ENCODE measurements at regions of chr2 and their contacts with region 1.

Region 1: DNA sequence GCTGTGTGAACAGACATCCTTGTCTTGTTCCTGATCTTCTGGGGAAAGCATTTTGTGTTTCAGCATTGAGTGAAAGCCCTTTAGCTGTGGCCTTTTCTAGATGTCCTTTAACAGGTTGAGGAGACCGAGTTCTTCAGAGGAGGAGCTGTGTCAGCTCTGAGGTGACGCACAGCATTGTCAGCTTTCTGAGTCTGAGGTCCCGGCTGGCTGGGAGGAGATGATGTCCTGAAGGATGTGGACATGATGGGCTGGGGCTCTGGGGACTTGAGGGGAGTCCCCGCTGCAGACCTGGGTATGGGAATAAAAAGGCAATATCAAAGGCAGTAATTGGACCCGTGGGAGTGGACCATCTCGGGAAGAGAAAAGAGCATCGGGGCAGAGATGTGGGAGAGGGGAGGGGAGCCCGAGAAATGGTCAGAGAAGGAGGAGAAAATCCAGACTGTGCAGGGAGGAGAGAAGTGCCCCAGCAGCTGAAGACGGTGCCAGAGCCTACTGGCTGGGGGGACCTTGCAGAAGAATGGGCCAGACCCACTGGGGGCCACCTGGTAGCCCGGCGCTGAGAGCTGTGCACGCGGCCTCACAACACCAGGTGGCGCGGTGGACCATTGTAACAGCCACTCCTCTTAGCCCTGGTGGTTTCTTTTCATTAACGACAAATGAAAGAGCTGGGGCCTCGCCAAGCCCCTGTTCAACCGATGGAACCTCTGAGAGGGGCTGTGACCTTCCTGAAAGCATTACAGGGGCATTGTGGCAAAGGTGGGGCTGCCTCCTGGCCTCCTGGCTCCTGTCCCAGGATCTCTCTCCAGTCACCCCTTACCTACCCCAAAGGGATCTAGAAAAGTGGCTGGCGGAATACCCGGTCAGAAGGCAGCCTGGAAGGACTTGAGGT is 61.6 kb downstream of the ST3GAL5 start:
- DNase-seq: peak; percentile 77 to 80 (median 79)
- H3K4me3 ChIP-seq: no peak overlapping the region
- H3K4me3 Mint-ChIP-seq: peak overlapping the region in 4 of 8 donors; percentile 36 to 64 (median 57)
- H3K27ac ChIP-seq: no peak overlapping the region
- H3K27ac Mint-ChIP-seq: peak overlapping the region; percentile 23 to 74 (median 57)
- H3K4me1 ChIP-seq: peaks cover 14% of the 10 kb centered on the region
- H3K4me1 Mint-ChIP-seq: peaks cover 8 to 24% (median 18%) of the 10 kb centered on the region in 4 donors
- H3K27me3 ChIP-seq: no peaks in the 10 kb centered on the region
- H3K27me3 Mint-ChIP-seq: peaks cover 3 to 4% of the 10 kb centered on the region in 2 donors

Region 2: DNA sequence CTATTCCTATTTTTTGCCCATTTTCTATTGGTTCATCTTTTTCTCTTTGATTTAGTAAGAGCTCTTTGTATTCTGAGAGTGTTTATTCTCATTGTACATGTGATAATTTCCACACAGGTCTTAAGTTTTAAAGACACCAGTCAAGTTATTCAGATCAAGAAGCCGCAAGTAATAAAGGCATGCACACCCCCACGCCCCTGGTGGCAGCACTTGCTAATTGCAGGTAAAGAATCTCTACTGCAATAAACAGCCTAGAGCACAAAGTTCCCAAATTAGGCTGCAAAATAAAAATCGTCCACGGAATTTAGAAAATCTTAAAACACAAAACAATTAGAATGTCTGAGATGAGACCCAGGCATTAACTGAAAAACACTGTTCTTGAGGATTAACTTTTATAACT is 16.3 kb after region 1 on chr2:
- CTCF ChIA-PET with region 1: interaction called, 25 read pairs
- POLR2A ChIA-PET with region 1: interaction called, 5 read pairs
- intact Hi-C with region 1: no loop called
- DNase-seq: peak in 1 of 5 donors; percentile 43
- H3K4me3 ChIP-seq: no peak overlapping the region
- H3K4me3 Mint-ChIP-seq: no peak overlapping the region
- H3K27ac ChIP-seq: no peak overlapping the region
- H3K27ac Mint-ChIP-seq: peak overlapping the region in 2 of 7 donors; percentile 44 to 64
- H3K4me1 ChIP-seq: peaks cover 20% of the 10 kb centered on the region
- H3K4me1 Mint-ChIP-seq: peaks cover 12 to 38% (median 21%) of the 10 kb centered on the region in 4 donors
- H3K27me3 ChIP-seq: no peaks in the 10 kb centered on the region
- H3K27me3 Mint-ChIP-seq: no peaks in the 10 kb centered on the region

Region 3: DNA sequence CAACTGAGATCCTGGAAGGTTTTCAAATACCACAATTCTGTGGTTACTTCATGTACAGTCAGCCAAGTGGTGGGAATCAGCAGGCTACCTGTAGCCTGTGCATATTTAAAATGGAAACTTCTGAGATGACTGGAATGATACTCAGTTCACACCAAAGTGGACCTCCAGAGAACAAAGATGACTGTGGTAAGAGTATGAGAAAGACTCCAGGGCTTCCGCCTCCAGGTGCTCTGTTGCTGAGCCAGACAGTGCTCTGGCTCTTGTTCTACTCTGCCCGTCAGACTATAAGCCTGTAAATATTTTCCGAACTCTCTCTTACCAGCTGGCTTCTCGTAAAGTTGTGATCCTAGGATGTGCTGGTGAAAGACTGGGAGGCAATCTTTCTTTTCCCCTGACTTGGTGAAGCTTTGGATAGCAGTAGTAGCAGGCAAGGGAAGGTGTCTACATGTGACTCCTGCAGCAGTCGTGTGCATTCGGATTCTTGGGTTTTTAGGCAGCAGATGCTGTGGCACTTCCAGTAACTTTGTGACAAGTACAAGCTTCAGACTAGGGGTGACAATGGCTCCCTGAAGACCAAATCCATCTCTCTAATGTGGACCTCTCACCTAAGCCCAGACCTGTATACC is 38.4 kb after region 1 on chr2:
- CTCF ChIA-PET with region 1: interaction called, 33 read pairs
- POLR2A ChIA-PET with region 1: no interaction called
- intact Hi-C with region 1: no loop called
- DNase-seq: peak in 1 of 5 donors; percentile 44
- H3K4me3 ChIP-seq: no peak overlapping the region
- H3K4me3 Mint-ChIP-seq: peak overlapping the region in 7 of 8 donors; percentile 14 to 64 (median 48)
- H3K27ac ChIP-seq: peak overlapping the region; percentile 13
- H3K27ac Mint-ChIP-seq: peak overlapping the region; percentile 55 to 89 (median 79)
- H3K4me1 ChIP-seq: peaks cover 55% of the 10 kb centered on the region
- H3K4me1 Mint-ChIP-seq: peaks cover 46 to 85% (median 63%) of the 10 kb centered on the region in 4 donors
- H3K27me3 ChIP-seq: no peaks in the 10 kb centered on the region
- H3K27me3 Mint-ChIP-seq: no peaks in the 10 kb centered on the region

Region 4: DNA sequence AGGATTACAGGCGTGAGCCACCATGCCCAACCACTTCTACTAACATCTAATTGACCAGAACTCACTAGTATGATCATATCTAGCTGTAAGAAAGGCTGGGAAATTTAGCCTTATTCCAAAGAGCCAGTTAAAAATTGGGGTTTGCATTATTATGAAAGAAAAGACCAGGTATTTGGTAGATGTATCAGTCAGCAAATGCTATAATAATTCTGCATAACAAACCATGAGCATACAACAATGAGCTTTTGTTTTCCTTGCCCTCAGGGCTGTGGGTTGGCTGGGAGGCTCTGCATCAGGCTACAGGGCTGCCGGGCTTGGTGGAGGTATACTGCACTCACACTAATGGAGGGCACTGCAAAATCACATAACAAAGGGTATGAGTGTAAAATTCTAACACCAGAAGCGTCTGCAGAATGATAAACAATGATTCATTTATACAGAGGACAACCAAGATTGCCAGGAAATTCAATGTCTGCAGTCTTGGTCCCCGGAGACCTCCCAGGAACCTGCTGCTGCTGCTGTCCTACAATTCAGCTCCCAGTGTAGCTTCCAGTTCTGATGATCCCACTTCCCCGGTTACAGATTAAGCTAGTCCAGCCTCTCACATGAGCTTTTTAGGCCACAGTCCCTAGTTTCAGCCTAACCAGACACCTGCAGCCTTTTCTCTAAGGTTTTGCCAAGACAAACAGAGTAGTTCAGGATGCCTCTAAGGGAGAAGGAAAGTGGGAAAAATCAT is 93.7 kb after region 1 on chr2:
- CTCF ChIA-PET with region 1: interaction called, 12 read pairs
- POLR2A ChIA-PET with region 1: no interaction called
- intact Hi-C with region 1: no loop called
- DNase-seq: no peak
- H3K4me3 ChIP-seq: no peak overlapping the region
- H3K4me3 Mint-ChIP-seq: no peak overlapping the region
- H3K27ac ChIP-seq: no peak overlapping the region
- H3K27ac Mint-ChIP-seq: no peak overlapping the region
- H3K4me1 ChIP-seq: peaks cover 7% of the 10 kb centered on the region
- H3K4me1 Mint-ChIP-seq: peaks cover 3 to 8% (median 7%) of the 10 kb centered on the region in 4 donors
- H3K27me3 ChIP-seq: no peaks in the 10 kb centered on the region
- H3K27me3 Mint-ChIP-seq: peaks cover 0 to 4% of the 10 kb centered on the region in 2 donors

Region 5: DNA sequence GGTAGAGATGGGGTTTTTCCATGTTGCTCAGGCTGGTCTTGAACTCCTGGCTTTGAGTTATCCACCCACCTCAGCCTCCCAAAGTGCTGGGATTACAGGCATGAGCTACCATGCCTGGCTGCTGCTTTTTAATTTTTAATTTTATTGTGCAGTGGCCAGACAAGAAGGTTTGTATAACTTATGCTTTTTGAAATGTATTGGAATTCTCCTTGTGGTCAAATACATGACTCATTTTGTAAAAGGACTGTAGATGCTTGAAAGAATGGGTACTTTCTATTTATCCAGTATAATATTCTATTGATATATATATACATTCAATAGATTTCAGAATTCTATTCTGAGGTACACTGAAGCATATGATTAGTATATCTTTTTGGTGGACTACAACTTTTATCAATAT is 144.1 kb after region 1 on chr2:
- CTCF ChIA-PET with region 1: no interaction called
- POLR2A ChIA-PET with region 1: no interaction called
- intact Hi-C with region 1: no loop called
- DNase-seq: no peak
- H3K4me3 ChIP-seq: no peak overlapping the region
- H3K4me3 Mint-ChIP-seq: no peak overlapping the region
- H3K27ac ChIP-seq: no peak overlapping the region
- H3K27ac Mint-ChIP-seq: no peak overlapping the region
- H3K4me1 ChIP-seq: no peaks in the 10 kb centered on the region
- H3K4me1 Mint-ChIP-seq: peaks cover 0 to 1% (median 0%) of the 10 kb centered on the region in 4 donors
- H3K27me3 ChIP-seq: no peaks in the 10 kb centered on the region
- H3K27me3 Mint-ChIP-seq: peaks cover 0 to 2% of the 10 kb centered on the region in 2 donors

Region 6: DNA sequence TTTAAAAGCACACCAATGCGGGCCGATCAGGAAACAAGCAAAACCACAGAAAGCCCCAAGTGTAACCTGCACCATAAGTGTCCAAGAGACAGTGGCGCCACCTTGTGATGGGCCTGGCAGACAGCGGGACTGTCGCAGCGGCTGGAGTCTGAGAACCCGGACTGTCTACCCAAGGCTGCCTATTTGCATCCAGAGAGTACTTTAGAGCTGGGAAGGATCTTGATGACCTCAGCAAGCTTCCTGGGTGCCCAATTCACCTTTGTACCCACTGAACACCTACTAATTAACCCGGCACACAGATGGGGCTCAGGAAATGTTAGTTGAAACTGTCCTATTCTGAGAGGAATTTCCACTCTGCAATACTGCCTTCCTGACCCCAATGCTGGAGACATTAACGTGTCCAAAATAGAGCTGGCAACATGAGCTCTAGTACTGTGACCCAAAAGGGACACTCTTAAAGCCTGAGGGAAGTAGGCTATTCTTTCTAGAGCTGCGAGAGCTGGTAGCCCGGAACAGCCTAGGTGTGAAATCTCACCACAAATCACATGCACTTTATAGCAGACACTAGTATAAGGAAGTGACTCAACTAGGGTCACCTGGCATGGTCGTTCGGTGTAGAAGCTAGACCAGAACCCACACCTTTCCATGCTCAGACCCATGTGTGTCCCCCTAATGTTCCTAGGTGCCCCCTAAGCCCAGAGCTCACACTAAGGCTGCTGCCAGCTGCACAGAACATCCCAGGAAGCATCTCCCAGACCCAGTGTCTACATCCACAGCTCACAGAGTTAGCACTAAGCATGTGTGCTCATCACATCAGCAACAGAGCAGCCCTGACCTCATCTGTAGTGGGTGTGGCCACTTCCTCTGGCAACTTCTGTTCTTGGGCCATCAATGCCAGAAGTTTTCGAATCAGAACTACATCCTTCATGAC is 253.0 kb after region 1 on chr2:
- CTCF ChIA-PET with region 1: interaction called, 548 read pairs
- POLR2A ChIA-PET with region 1: interaction called, 30 read pairs
- intact Hi-C with region 1: loop called (anchors 1 kb)
- DNase-seq: peak; percentile 79 to 87 (median 82)
- H3K4me3 ChIP-seq: no peak overlapping the region
- H3K4me3 Mint-ChIP-seq: peak overlapping the region in 7 of 8 donors; percentile 18 to 74 (median 57)
- H3K27ac ChIP-seq: peak overlapping the region; percentile 64
- H3K27ac Mint-ChIP-seq: peak overlapping the region; percentile 85 to 96 (median 95)
- H3K4me1 ChIP-seq: peaks cover 21% of the 10 kb centered on the region
- H3K4me1 Mint-ChIP-seq: peaks cover 15 to 54% (median 37%) of the 10 kb centered on the region in 4 donors
- H3K27me3 ChIP-seq: no peaks in the 10 kb centered on the region
- H3K27me3 Mint-ChIP-seq: no peaks in the 10 kb centered on the region

Measured in CD4-positive, alpha-beta memory T cell (primary cell).